ENCODE measurements at regions of chrX and their contacts with region 1.

Region 1: GRCh38 chrX:100685284-100685996 is 41.4 kb downstream of the SRPX2 start:
- DNase-seq: peak; percentile 41
- H3K4me3 Mint-ChIP-seq: no peak overlapping the region
- H3K27ac Mint-ChIP-seq: no peak overlapping the region
- H3K4me1 Mint-ChIP-seq: peaks cover 10% of the 10 kb centered on the region
- H3K27me3 Mint-ChIP-seq: peaks cover 4% of the 10 kb centered on the region

Region 2: GRCh38 chrX:100721328-100721727 is 35.9 kb after region 1 on chrX:
- intact Hi-C with region 1: no loop called
- DNase-seq: no peak
- H3K4me3 Mint-ChIP-seq: no peak overlapping the region
- H3K27ac Mint-ChIP-seq: no peak overlapping the region
- H3K4me1 Mint-ChIP-seq: no peaks in the 10 kb centered on the region
- H3K27me3 Mint-ChIP-seq: no peaks in the 10 kb centered on the region

Region 3: DNA sequence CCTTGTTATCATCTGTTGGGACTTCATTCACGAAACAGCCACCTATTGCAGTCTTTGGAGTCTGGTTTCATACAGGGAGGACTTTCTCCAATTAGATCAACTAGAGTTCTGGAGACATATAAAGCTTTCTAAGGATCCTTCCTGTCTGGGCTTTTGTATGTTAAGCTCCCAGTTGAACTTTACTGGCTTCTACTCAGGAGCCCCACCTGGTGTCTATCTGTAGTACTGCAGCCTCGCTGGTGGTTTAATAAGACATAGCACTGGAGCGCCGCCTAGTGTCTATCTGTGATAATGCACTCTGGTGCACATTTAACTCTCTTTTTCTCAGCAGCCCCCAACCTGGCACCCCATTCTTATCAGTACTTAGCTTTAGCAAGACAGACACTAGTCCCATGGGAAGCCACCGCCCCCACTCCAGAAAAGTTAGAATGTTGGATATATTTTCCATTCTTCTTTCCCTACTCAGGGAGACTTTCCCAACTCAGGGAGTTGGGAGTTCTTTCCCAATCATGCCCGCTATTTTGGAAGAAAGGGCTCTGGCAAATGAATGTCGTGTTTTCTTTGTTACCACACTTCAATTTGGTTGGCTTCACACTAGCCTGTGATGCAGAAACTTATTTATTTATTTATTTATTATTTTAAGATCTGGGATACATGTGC is 83.4 kb after region 1 on chrX:
- intact Hi-C with region 1: loop called (anchors 1 kb)
- DNase-seq: peak; percentile 63
- H3K4me3 Mint-ChIP-seq: no peak overlapping the region
- H3K27ac Mint-ChIP-seq: no peak overlapping the region
- H3K4me1 Mint-ChIP-seq: no peaks in the 10 kb centered on the region
- H3K27me3 Mint-ChIP-seq: peaks cover 20% of the 10 kb centered on the region

Region 4: GRCh38 chrX:101287402-101287801 is 602.0 kb after region 1 on chrX:
- intact Hi-C with region 1: loop called (anchors 5 kb)
- DNase-seq: no peak
- H3K4me3 Mint-ChIP-seq: no peak overlapping the region
- H3K27ac Mint-ChIP-seq: no peak overlapping the region
- H3K4me1 Mint-ChIP-seq: no peaks in the 10 kb centered on the region
- H3K27me3 Mint-ChIP-seq: peaks cover 6% of the 10 kb centered on the region